Heart left ventricle (tissue), 16 donors: ENCODE measurements at regions of chr6 and their contacts with region 1.

Region 1: GRCh38 chr6:56364827-56365313 is 117.5 kb upstream of the COL21A1 start:
- DNase-seq: no peak
- ATAC-seq: no peak
- H3K4me3 ChIP-seq: no peak overlapping the region
- H3K27ac ChIP-seq: no peak overlapping the region
- H3K4me1 ChIP-seq: peaks cover 1 to 39% (median 24%) of the 10 kb centered on the region in 12 donors
- H3K27me3 ChIP-seq: no peaks in the 10 kb centered on the region
- CTCF ChIP-seq: no peak
- POLR2A ChIP-seq: no peak

Region 2: DNA sequence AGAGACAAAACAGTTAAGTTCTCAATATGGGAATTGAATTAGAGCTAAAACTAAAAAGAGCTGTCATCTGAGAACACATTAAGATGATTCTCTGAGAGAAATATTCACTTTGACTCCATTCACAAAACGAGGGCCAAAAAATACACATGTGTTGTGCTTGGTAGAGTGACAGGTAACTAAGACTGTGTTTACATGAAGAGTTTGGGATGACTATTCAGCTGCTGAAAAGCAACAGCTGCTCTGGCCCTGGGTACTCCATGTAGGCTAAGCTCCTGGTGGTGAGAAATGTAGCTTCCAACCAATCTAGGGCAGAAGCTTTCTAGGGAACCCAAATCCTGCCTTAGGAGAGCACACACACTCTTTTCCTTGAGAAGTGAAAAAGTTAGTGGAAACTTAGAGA is 302.0 kb before region 1 on chr6:
- intact Hi-C with region 1: no loop called
- DNase-seq: no peak
- ATAC-seq: peak in 2 of 4 donors; percentile 32 to 49
- H3K4me3 ChIP-seq: no peak overlapping the region
- H3K27ac ChIP-seq: no peak overlapping the region
- H3K4me1 ChIP-seq: peaks cover 0 to 6% (median 0%) of the 10 kb centered on the region in 12 donors
- H3K27me3 ChIP-seq: no peaks in the 10 kb centered on the region
- CTCF ChIP-seq: no peak
- POLR2A ChIP-seq: no peak

Region 3: DNA sequence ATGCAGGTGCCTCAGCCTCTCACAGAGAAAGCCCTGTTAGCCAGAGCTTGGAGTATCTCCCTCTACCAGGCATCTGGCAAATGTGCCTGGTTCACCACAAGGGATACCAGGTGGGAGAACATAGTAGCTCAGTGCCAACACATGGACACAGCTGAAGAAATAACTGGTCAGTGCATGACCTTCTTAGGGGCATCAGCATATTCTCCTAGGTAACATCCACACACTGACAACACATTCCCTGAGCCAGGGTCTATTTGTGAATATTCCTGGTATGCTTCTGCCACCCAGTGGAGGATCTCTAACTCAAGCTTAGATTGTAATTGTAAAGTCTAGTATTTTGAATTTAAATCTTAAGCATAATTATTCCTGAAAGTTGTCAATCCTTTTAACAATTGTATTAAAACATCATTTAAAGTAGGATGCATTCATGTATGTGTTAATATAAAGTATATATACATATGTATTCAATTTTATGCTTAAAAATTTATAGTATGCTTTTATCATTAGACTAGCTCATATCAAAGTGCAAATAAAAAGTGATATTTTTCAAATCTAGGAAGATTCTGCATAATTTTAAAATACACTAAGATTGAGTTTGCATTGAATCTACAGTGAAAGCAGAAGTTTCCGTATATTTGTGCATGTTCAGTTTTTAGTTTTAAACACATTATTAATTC is 72.2 kb before region 1 on chr6:
- intact Hi-C with region 1: no loop called
- DNase-seq: peak in 2 of 5 donors; percentile 19 to 41
- ATAC-seq: peak; percentile 83 to 93 (median 90)
- H3K4me3 ChIP-seq: no peak overlapping the region
- H3K27ac ChIP-seq: no peak overlapping the region
- H3K4me1 ChIP-seq: peaks cover 0 to 7% (median 3%) of the 10 kb centered on the region in 12 donors
- H3K27me3 ChIP-seq: no peaks in the 10 kb centered on the region
- CTCF ChIP-seq: peak; percentile 38 to 77 (median 67)
- POLR2A ChIP-seq: no peak

Region 4: GRCh38 chr6:56387621-56388394 is 22.9 kb after region 1 on chr6:
- intact Hi-C with region 1: no loop called
- DNase-seq: peak in 3 of 5 donors; percentile 17 to 58 (median 34)
- ATAC-seq: peak; percentile 83 to 95 (median 90)
- H3K4me3 ChIP-seq: no peak overlapping the region
- H3K27ac ChIP-seq: no peak overlapping the region
- H3K4me1 ChIP-seq: peaks cover 0 to 37% (median 10%) of the 10 kb centered on the region in 12 donors
- H3K27me3 ChIP-seq: no peaks in the 10 kb centered on the region
- CTCF ChIP-seq: no peak
- POLR2A ChIP-seq: no peak

Region 5: DNA sequence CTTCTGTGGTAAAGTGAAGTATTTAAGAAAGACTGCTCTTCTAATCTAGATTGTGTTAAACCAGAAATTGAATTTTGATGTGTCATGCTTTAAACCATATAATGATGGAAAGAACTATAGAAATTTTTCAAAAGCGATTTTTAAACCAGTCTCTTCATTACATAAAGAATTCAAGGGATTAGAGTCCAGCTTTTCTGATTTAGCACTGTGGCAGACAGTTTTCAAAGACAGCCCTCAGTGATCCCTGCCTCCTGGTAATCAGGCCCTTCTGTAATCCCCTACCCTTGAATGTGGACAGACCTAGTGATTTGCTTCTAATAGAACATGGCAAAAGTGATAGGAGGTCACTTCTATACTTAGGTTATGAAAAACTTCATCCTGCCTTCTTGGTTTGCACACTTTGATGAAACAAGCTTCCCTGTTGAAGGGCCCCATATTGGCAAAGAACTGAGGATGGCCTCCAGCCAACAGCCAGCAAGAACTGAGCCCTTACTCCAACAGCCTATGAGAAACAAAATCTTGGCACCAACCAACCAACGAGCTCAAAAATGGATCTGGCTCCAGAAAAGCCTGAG is 86.4 kb after region 1 on chr6:
- intact Hi-C with region 1: loop called in 3 of 10 experiments (anchors 5 kb)
- DNase-seq: peak; percentile 74 to 83 (median 81)
- ATAC-seq: peak; percentile 71 to 88 (median 78)
- H3K4me3 ChIP-seq: no peak overlapping the region
- H3K27ac ChIP-seq: peak overlapping the region; percentile 39 to 83 (median 70)
- H3K4me1 ChIP-seq: peaks cover 0 to 31% (median 14%) of the 10 kb centered on the region in 12 donors
- H3K27me3 ChIP-seq: no peaks in the 10 kb centered on the region
- CTCF ChIP-seq: no peak
- POLR2A ChIP-seq: no peak

Region 6: GRCh38 chr6:56542364-56543331 is 177.8 kb after region 1 on chr6:
- intact Hi-C with region 1: loop called in 4 of 10 experiments (anchors 1 to 10 kb)
- DNase-seq: peak; percentile 90 to 97 (median 92)
- ATAC-seq: peak; percentile 94 to 98 (median 96)
- H3K4me3 ChIP-seq: peak overlapping the region; percentile 6 to 72 (median 61)
- H3K27ac ChIP-seq: peak overlapping the region; percentile 80 to 92 (median 90)
- H3K4me1 ChIP-seq: peaks cover 6 to 62% (median 47%) of the 10 kb centered on the region in 12 donors
- H3K27me3 ChIP-seq: no peaks in the 10 kb centered on the region
- CTCF ChIP-seq: peak in 10 of 12 donors; percentile 23 to 73 (median 44)
- POLR2A ChIP-seq: peak in 1 of 2 donors; percentile 92

Region 7: GRCh38 chr6:56570413-56571359 is 205.8 kb after region 1 on chr6:
- intact Hi-C with region 1: loop called in 3 of 10 experiments (anchors 2 to 5 kb)
- DNase-seq: no peak
- ATAC-seq: peak in 3 of 4 donors; percentile 66 to 80 (median 75)
- H3K4me3 ChIP-seq: no peak overlapping the region
- H3K27ac ChIP-seq: no peak overlapping the region
- H3K4me1 ChIP-seq: peaks cover 0 to 28% (median 2%) of the 10 kb centered on the region in 12 donors
- H3K27me3 ChIP-seq: no peaks in the 10 kb centered on the region
- CTCF ChIP-seq: peak; percentile 43 to 75 (median 62)
- POLR2A ChIP-seq: no peak

Region 8: DNA sequence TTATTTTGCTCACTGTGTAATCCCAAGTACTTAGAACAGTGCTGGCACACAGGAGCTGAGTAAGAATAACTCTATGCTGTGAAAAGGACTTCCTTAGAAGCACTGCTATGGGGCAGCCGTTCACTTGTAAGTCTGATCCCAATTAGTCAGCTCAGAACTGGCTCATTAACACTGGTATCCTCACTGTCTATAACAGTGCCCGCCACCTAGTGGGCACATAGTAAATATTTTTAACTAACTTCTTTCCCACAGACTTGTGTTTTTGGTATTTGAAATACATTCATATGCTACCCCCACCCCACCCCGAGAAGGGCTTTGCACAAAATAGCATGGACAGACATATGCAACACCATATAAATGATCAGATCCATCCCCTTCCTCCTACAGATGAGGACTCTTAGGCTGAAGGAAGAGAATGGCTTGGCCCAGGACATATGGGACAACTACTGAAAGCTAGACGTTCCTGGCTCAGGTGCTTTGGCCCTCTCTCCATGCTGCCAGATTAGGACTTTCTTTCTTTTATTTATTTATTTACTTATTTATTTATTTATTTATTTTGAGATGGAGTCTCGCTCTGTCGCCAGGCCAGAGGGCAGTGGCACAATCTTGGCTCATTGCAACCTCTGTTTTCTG is 230.7 kb after region 1 on chr6:
- intact Hi-C with region 1: loop called in 6 of 10 experiments (anchors 1 to 5 kb)
- DNase-seq: peak in 1 of 5 donors; percentile 44
- ATAC-seq: peak; percentile 35 to 75 (median 66)
- H3K4me3 ChIP-seq: no peak overlapping the region
- H3K27ac ChIP-seq: peak overlapping the region in 1 of 12 donors; percentile 50
- H3K4me1 ChIP-seq: peaks cover 0 to 28% (median 0%) of the 10 kb centered on the region in 12 donors
- H3K27me3 ChIP-seq: no peaks in the 10 kb centered on the region
- CTCF ChIP-seq: peak; percentile 49 to 71 (median 59)
- POLR2A ChIP-seq: no peak